Activated CD8-positive, alpha-beta T cell treated with anti-CD3 and anti-CD28 coated beads for 36 hours (primary cell): ENCODE measurements at regions of chr11 and their contacts with region 1.

Region 1: GRCh38 chr11:130916238-130916855 is at the start of gene SNX19:
- DNase-seq: peak; percentile 89
- ATAC-seq: peak; percentile 100
- H3K4me3 Mint-ChIP-seq: peak within 1 kb of the TSS; percentile 77
- H3K27ac Mint-ChIP-seq: peak within 1 kb of the TSS; percentile 73
- H3K4me1 Mint-ChIP-seq: peaks cover 28% of the 10 kb centered on the region
- H3K27me3 Mint-ChIP-seq: no peaks in the 10 kb centered on the region
- CTCF ChIP-seq: peak; percentile 84
- total RNA-seq, gene SNX19: 20.9 to 22.7 TPM

Region 2: GRCh38 chr11:130904380-130904779 is 12.0 kb before region 1 on chr11:
- CTCF ChIA-PET with region 1: interaction called, 10 read pairs
- POLR2A ChIA-PET with region 1: interaction called, 3 read pairs
- intact Hi-C with region 1: no loop called
- DNase-seq: no peak
- ATAC-seq: no peak
- H3K4me3 Mint-ChIP-seq: no peak overlapping the region
- H3K27ac Mint-ChIP-seq: no peak overlapping the region
- H3K4me1 Mint-ChIP-seq: peaks cover 6% of the 10 kb centered on the region
- H3K27me3 Mint-ChIP-seq: no peaks in the 10 kb centered on the region
- CTCF ChIP-seq: no peak

Region 3: DNA sequence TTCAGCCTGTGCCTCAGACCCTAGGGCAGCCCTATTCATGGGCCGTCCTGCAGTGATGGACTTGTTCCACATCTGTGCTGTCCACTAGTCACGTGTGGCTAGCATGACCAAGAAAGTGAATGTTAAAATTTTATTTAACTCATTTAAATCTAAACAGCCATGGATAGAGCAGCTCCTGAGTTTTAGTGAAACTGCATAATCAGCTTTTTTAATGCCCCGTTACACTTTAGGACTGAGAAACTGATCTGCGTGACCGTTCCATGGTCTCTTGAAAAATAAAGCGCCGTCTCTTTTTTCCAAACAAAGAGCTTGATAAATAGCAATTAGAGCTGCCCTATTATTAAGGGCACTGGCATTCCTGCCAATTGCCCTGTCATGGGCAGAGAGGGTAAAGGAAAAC is 76.4 kb after region 1 on chr11:
- CTCF ChIA-PET with region 1: no interaction called
- POLR2A ChIA-PET with region 1: no interaction called
- intact Hi-C with region 1: no loop called
- DNase-seq: no peak
- ATAC-seq: no peak
- H3K4me3 Mint-ChIP-seq: no peak overlapping the region
- H3K27ac Mint-ChIP-seq: no peak overlapping the region
- H3K4me1 Mint-ChIP-seq: no peaks in the 10 kb centered on the region
- H3K27me3 Mint-ChIP-seq: no peaks in the 10 kb centered on the region
- CTCF ChIP-seq: no peak

Region 4: GRCh38 chr11:131033151-131033685 is 116.9 kb after region 1 on chr11:
- CTCF ChIA-PET with region 1: no interaction called
- POLR2A ChIA-PET with region 1: no interaction called
- intact Hi-C with region 1: no loop called
- DNase-seq: no peak
- ATAC-seq: no peak
- H3K4me3 Mint-ChIP-seq: no peak overlapping the region
- H3K27ac Mint-ChIP-seq: no peak overlapping the region
- H3K4me1 Mint-ChIP-seq: no peaks in the 10 kb centered on the region
- H3K27me3 Mint-ChIP-seq: peaks cover 2% of the 10 kb centered on the region
- CTCF ChIP-seq: no peak

Region 5: DNA sequence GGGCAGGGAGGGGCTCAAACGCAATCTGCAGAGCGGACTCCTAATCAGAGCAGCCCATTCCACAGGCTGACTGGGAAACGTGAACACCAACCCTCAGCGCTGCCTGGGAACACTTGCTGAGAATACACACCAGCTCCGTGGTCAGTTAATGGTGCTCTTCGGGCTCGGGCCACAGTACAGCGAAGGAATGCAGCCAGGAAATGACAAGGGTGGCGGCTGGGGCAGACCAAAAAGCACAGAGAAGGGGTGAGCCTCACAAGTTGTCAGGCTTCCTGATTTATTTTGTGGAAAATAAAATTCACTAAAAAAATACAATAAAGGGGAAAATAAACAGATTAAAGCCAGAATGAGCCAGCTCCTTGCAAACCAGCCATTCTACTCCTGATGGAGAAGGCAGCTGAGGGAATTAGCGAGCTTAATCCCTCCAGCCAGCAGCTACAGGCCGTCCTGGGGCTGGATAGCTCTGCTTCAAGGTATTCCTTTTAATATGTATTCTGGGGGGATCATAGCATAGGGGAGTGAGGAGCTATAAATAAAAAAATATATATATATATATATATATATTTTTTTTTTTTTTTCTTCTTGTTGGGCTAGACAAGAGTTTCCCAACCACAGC is 288.5 kb after region 1 on chr11:
- CTCF ChIA-PET with region 1: no interaction called
- POLR2A ChIA-PET with region 1: no interaction called
- intact Hi-C with region 1: no loop called
- DNase-seq: no peak
- ATAC-seq: no peak
- H3K4me3 Mint-ChIP-seq: no peak overlapping the region
- H3K27ac Mint-ChIP-seq: no peak overlapping the region
- H3K4me1 Mint-ChIP-seq: no peaks in the 10 kb centered on the region
- H3K27me3 Mint-ChIP-seq: no peaks in the 10 kb centered on the region
- CTCF ChIP-seq: no peak